IMR-90 (cell line): ENCODE measurements at regions of chr13 and their contacts with region 1.

Region 1: DNA sequence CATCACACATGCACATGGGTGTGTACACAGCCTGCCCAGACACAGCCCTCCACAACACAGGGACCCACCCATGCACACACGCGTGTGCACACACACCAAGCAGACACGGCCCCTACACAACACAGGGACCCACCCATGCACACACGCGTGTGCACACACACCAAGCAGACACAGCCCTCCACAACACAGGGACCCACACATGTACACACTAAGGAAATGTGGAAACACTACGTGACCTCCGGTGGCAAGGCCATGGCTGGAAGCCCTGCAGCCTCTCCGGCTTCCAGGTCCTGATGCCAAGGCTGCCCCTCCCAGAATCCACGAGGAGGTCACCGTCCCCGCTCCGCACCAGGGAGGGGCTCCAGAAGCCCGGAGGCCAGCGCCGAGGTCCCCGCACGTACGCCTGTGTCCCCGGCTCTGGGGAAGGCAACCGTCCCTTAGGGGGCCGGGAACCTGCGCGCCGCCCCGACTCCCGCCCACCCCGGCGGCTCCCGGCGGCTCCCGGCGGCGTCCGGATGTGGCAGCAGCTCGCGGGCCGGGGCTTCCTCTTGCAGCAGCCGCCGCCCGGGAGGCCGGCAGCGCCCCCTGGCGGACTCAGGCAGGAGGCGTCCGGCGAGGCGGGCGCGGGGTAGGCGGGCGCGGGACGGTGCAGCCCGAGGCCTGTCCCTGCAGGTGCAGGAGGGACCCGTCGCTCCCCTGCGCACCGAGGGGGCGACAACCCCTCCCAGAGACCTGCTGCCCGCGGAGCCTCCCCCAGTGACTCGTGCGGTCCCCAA is 29.8 kb upstream of the GRTP1 start:
- DNase-seq: peak; percentile 59
- ATAC-seq: peak; percentile 97
- H3K4me3 ChIP-seq: peak overlapping the region; percentile 89
- H3K27ac ChIP-seq: peak overlapping the region; percentile 73
- H3K4me1 ChIP-seq: peaks cover 4% of the 10 kb centered on the region; the same call in 1 of the 2 replicates
- H3K27me3 ChIP-seq: no peaks in the 10 kb centered on the region
- CTCF ChIP-seq: peak; percentile 85
- POLR2A ChIP-seq: no peak
- RAD21 ChIP-seq: peak; percentile 88

Region 2: DNA sequence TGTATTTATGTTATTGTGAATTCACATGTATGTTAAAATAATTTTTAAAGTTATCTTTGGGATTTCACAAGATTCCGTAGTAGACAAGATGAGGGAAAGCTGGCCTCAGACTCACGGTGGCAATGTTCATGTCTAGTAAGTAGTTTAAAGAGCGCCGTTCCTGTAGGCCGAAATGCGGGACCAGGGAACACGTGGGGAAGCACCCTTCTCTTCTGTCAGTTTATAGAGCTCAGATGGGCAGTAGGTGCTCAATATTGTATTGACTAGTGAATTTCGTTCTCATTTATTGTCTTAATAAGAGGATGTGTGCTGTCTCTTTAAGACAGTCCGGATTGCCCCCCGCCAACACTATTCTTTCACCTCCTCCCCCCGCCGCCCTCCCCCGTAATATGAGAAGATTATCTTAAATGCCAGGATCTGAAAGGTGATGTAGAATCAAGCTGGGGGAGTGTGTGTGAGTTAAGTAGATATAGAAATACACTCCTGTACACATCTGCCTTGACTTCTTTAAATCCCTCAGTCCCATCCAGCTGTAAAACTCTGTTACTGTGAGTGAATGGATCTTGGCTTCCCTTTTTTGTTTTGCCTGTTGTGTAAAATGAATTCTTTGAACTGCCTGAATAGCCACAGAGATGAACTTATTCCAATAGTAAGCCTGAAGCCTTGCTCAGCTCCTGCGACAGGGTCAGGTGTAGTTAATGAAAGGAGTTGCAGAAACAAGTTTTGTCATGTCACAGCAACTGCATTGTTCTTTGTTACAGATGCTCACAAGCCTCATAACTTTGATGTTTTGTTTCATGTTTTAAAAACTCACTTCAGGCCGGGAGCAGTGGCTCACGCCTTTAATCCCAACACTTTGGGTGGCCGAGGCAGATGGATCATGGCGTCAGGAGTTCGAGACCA is 95.5 kb before region 1 on chr13:
- CTCF ChIA-PET with region 1: no interaction called
- POLR2A ChIA-PET with region 1: interaction called, 16 read pairs
- dilution Hi-C with region 1: no loop called
- in situ Hi-C with region 1: no loop called
- intact Hi-C with region 1: no loop called
- DNase-seq: no peak
- ATAC-seq: no peak
- H3K4me3 ChIP-seq: peak overlapping the region; percentile 73
- H3K27ac ChIP-seq: peak overlapping the region; percentile 40; the same call in 1 of the 2 replicates
- H3K4me1 ChIP-seq: peaks cover 6% of the 10 kb centered on the region; the same call in 1 of the 2 replicates
- H3K27me3 ChIP-seq: no peaks in the 10 kb centered on the region
- CTCF ChIP-seq: no peak
- POLR2A ChIP-seq: no peak
- RAD21 ChIP-seq: no peak

Region 3: GRCh38 chr13:113518076-113518803 is 124.5 kb after region 1 on chr13:
- CTCF ChIA-PET with region 1: interaction called, 11 read pairs
- POLR2A ChIA-PET with region 1: no interaction called
- dilution Hi-C with region 1: no loop called
- in situ Hi-C with region 1: no loop called
- intact Hi-C with region 1: no loop called
- DNase-seq: no peak
- ATAC-seq: no peak
- H3K4me3 ChIP-seq: no peak overlapping the region
- H3K27ac ChIP-seq: no peak overlapping the region
- H3K4me1 ChIP-seq: peaks cover 5% of the 10 kb centered on the region; the same call in 1 of the 2 replicates
- H3K27me3 ChIP-seq: no peaks in the 10 kb centered on the region
- CTCF ChIP-seq: no peak
- POLR2A ChIP-seq: no peak
- RAD21 ChIP-seq: no peak

Region 4: GRCh38 chr13:114194853-114195252 is 801.1 kb after region 1 on chr13:
- CTCF ChIA-PET with region 1: no interaction called
- POLR2A ChIA-PET with region 1: no interaction called
- dilution Hi-C with region 1: no loop called
- in situ Hi-C with region 1: no loop called
- intact Hi-C with region 1: no loop called
- DNase-seq: no peak
- ATAC-seq: no peak
- H3K4me3 ChIP-seq: no peak overlapping the region
- H3K27ac ChIP-seq: no peak overlapping the region
- H3K4me1 ChIP-seq: no peaks in the 10 kb centered on the region
- H3K27me3 ChIP-seq: peaks cover 28% of the 10 kb centered on the region
- CTCF ChIP-seq: no peak
- POLR2A ChIP-seq: no peak
- RAD21 ChIP-seq: no peak